H1 (cell line): ENCODE measurements at regions of chr5 and their contacts with region 1.

Region 1: GRCh38 chr5:167049043-167049663 is 1242.3 kb upstream of the WWC1 start:
- DNase-seq: no peak
- H3K4me3 ChIP-seq: no peak overlapping the region
- H3K27ac ChIP-seq: no peak overlapping the region
- H3K4me1 ChIP-seq: peaks cover 0 to 6% (median 1%) of the 10 kb centered on the region in 4 experiments; a peak in 3 of 7 replicates
- H3K27me3 ChIP-seq: no peaks in the 10 kb centered on the region
- CTCF ChIP-seq: peak in 2 of 3 experiments; percentile 52 to 73; a peak in 3 of 4 replicates
- EP300 ChIP-seq: no peak
- POLR2A ChIP-seq: no peak
- RAD21 ChIP-seq: peak; percentile 67 to 73

Region 2: GRCh38 chr5:166398131-166398530 is 651.0 kb before region 1 on chr5:
- CTCF ChIA-PET with region 1: no interaction called
- POLR2A ChIA-PET with region 1: no interaction called
- DNase-seq: no peak
- H3K4me3 ChIP-seq: no peak overlapping the region
- H3K27ac ChIP-seq: no peak overlapping the region
- H3K4me1 ChIP-seq: peaks cover 0 to 2% (median 0%) of the 10 kb centered on the region in 4 experiments; a peak in 1 of 7 replicates
- H3K27me3 ChIP-seq: no peaks in the 10 kb centered on the region
- CTCF ChIP-seq: no peak
- EP300 ChIP-seq: no peak
- POLR2A ChIP-seq: no peak
- RAD21 ChIP-seq: no peak

Region 3: GRCh38 chr5:166961039-166961438 is 88.1 kb before region 1 on chr5:
- CTCF ChIA-PET with region 1: interaction called, 22 read pairs
- POLR2A ChIA-PET with region 1: no interaction called
- DNase-seq: no peak
- H3K4me3 ChIP-seq: no peak overlapping the region
- H3K27ac ChIP-seq: no peak overlapping the region
- H3K4me1 ChIP-seq: peaks cover 0 to 3% (median 0%) of the 10 kb centered on the region in 4 experiments; a peak in 1 of 7 replicates
- H3K27me3 ChIP-seq: no peaks in the 10 kb centered on the region
- CTCF ChIP-seq: peak in 2 of 3 experiments; percentile 9 to 32; a peak in 2 of 4 replicates
- EP300 ChIP-seq: no peak
- POLR2A ChIP-seq: no peak
- RAD21 ChIP-seq: peak; percentile 55 to 62

Region 4: DNA sequence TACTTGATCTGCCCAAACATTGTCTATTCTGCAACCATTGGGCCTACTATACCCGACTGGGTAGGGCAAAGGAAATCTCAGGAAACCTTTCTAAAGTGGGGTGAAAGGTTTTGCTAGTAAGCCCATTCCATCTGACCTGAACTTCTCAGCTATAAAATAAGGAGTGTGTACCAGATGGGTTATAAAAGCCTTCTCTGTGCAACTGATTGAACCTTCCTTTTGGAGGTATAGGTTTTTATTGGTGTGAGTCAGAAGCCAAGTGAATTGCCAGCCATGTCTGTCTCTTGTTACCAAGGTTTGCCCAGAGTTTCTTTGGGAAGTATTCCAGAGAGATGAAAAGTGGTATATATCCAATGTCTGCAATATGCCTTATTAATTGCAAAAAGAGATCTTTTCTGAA is 28.7 kb before region 1 on chr5:
- CTCF ChIA-PET with region 1: interaction called, 14 read pairs
- POLR2A ChIA-PET with region 1: no interaction called
- DNase-seq: no peak
- H3K4me3 ChIP-seq: no peak overlapping the region
- H3K27ac ChIP-seq: no peak overlapping the region
- H3K4me1 ChIP-seq: no peaks in the 10 kb centered on the region
- H3K27me3 ChIP-seq: no peaks in the 10 kb centered on the region
- CTCF ChIP-seq: no peak
- EP300 ChIP-seq: no peak
- POLR2A ChIP-seq: no peak
- RAD21 ChIP-seq: no peak

Region 5: DNA sequence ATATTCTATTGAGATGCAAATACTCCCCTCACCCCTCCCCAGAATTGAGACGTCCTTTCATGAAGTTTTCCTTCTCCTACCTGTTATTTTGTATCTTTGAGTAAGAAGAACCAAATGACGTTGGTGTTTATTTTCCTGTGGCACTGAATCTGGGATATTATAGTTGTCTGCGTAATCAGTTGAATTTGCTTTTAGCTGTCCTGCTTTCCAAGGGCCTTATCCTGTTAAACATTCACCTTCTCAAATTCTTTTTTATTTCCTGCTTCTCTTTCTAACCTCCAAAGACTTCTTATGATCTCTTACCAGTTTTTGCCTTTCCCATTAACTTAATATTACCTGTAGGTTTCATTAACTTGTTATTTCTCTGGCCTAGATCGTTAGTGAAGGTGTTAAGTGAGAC is 12.6 kb before region 1 on chr5:
- CTCF ChIA-PET with region 1: interaction called, 67 read pairs
- POLR2A ChIA-PET with region 1: no interaction called
- DNase-seq: no peak
- H3K4me3 ChIP-seq: no peak overlapping the region
- H3K27ac ChIP-seq: no peak overlapping the region
- H3K4me1 ChIP-seq: no peaks in the 10 kb centered on the region
- H3K27me3 ChIP-seq: no peaks in the 10 kb centered on the region
- CTCF ChIP-seq: no peak
- EP300 ChIP-seq: no peak
- POLR2A ChIP-seq: no peak
- RAD21 ChIP-seq: no peak

Region 6: GRCh38 chr5:167217097-167217743 is 168.1 kb after region 1 on chr5:
- CTCF ChIA-PET with region 1: interaction called, 17 read pairs
- POLR2A ChIA-PET with region 1: no interaction called
- DNase-seq: no peak
- H3K4me3 ChIP-seq: 0 out of 8 replicates have a peak overlapping the region, but pooled peaks of 1 of the 4 experiments have one; percentile 15
- H3K27ac ChIP-seq: no peak overlapping the region
- H3K4me1 ChIP-seq: peaks cover 0 to 5% (median 2%) of the 10 kb centered on the region in 4 experiments; a peak in 3 of 7 replicates
- H3K27me3 ChIP-seq: no peaks in the 10 kb centered on the region
- CTCF ChIP-seq: no peak; a peak in 1 of 4 replicates
- EP300 ChIP-seq: no peak
- POLR2A ChIP-seq: no peak
- RAD21 ChIP-seq: peak in 1 of 2 experiments; percentile 26; a peak in 2 of 4 replicates

Region 7: GRCh38 chr5:167250996-167251395 is 201.8 kb after region 1 on chr5:
- CTCF ChIA-PET with region 1: interaction called, 34 read pairs
- POLR2A ChIA-PET with region 1: no interaction called
- DNase-seq: no peak
- H3K4me3 ChIP-seq: no peak overlapping the region
- H3K27ac ChIP-seq: no peak overlapping the region
- H3K4me1 ChIP-seq: peaks cover 0 to 4% (median under 1%) of the 10 kb centered on the region in 4 experiments; a peak in 3 of 7 replicates
- H3K27me3 ChIP-seq: no peaks in the 10 kb centered on the region
- CTCF ChIP-seq: no peak
- EP300 ChIP-seq: no peak
- POLR2A ChIP-seq: no peak
- RAD21 ChIP-seq: no peak